Transverse colon (tissue), 4 donors: ENCODE measurements at regions of chr2 and their contacts with region 1.

Region 1: DNA sequence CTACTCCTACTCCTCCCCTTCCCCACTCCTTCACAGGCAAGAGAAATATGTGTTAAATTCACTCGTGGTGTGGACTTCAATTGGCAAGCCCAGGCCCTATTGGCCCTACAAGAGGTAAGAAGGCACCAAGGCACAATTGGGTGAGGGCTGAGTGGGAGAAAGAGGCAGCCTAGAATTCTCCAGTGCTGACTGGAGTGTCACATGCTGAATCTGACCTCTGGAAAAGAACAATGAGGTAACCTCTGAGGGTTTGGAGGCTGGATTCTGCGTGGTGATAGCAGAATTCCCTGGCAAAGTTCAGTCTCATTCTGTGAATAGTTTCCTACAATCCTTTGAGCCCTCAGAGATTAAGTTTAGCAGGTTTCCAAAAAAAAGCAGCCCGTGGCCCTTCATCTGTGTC is 6.9 kb downstream of the CENPA start:
- DNase-seq: no peak
- H3K4me3 ChIP-seq: no peak overlapping the region
- H3K27ac ChIP-seq: no peak overlapping the region
- H3K4me1 ChIP-seq: no peaks in the 10 kb centered on the region
- H3K27me3 ChIP-seq: peaks cover 4% of the 10 kb centered on the region
- CTCF ChIP-seq: no peak
- EP300 ChIP-seq: no peak
- POLR2A ChIP-seq: no peak

Region 2: GRCh38 chr2:25690058-25690457 is 1102.7 kb before region 1 on chr2:
- in situ Hi-C with region 1: no loop called
- intact Hi-C with region 1: loop called (anchors 5 kb)
- DNase-seq: no peak
- H3K4me3 ChIP-seq: no peak overlapping the region
- H3K27ac ChIP-seq: no peak overlapping the region
- H3K4me1 ChIP-seq: no peaks in the 10 kb centered on the region
- H3K27me3 ChIP-seq: no peaks in the 10 kb centered on the region
- CTCF ChIP-seq: no peak
- EP300 ChIP-seq: no peak
- POLR2A ChIP-seq: no peak